ENCODE measurements at regions of chr22 and their contacts with region 1.

Region 1: DNA sequence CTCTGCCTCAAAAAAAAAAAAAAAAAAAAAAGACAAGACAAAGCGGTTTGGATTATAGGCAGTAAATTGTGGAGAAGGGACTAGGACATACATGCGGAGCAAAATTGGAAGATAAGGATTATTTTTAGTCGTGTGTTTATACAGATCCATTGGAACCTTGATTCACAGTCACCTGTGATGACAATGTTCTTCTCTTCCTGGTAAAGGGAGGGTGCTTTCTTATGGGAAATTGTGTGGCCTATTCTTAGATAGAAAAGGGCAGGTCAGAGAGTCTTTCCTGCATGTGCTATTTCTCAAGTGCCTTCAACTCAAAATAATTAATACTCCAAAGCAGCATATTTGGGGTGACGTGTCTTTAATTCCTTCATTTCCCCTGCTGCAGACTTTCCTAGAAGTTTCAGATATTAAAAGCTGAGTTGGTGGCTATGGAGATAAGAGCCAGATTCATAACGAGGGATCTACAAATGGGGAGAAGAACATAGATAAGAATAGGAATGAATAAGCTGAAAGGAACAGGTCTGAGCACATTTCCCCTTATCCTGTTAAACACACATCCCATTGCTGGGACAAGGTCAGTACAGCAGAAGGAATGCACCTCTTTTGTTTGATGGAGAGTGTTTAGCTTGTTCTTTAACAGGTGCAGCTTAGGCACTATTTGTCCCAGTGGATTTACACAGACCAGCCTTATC is 22.5 kb downstream of the GSTT2B start:
- DNase-seq: no peak
- H3K4me3 ChIP-seq: no peak overlapping the region
- H3K27ac ChIP-seq: peak overlapping the region in 3 of 4 donors; percentile 19 to 58 (median 51)
- H3K4me1 ChIP-seq: peaks cover 0 to 14% (median 0%) of the 10 kb centered on the region in 3 donors
- H3K27me3 ChIP-seq: no peaks in the 10 kb centered on the region
- CTCF ChIP-seq: no peak
- POLR2A ChIP-seq: no peak

Region 2: GRCh38 chr22:23878219-23878618 is 60.3 kb before region 1 on chr22:
- intact Hi-C with region 1: no loop called
- DNase-seq: no peak
- H3K4me3 ChIP-seq: no peak overlapping the region
- H3K27ac ChIP-seq: no peak overlapping the region
- H3K4me1 ChIP-seq: no peaks in the 10 kb centered on the region
- H3K27me3 ChIP-seq: no peaks in the 10 kb centered on the region
- CTCF ChIP-seq: no peak
- POLR2A ChIP-seq: no peak

Region 3: DNA sequence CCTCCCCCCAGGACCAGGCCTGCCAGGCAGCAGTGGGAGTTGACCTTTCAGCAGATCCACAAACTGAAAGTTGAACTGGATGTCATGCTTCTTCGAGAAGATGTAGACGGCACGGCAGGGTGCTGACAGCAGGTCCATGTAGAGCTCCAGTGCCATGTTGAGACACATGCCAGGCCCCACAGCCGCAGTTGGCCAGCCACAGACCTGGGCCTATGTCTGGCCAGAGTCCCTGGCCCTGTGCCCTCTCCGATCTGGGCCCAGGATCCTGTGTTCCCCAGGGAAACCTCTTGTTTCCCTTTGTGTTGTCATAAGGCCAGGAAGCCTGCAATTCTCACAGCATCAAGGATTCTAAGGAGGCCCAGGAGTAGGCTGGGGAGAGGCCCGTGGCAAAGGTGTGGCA is 66.7 kb after region 1 on chr22 and contains the start of gene GSTT4:
- intact Hi-C with region 1: loop called (anchors 5 kb)
- DNase-seq: no peak
- H3K4me3 ChIP-seq: no peak within 1 kb of the TSS
- H3K27ac ChIP-seq: no peak within 1 kb of the TSS
- H3K4me1 ChIP-seq: peaks cover 0 to 11% (median 0%) of the 10 kb centered on the region in 3 donors
- H3K27me3 ChIP-seq: no peaks in the 10 kb centered on the region
- CTCF ChIP-seq: no peak
- POLR2A ChIP-seq: no peak
- total RNA-seq, gene GSTT4: not detected

Region 4: DNA sequence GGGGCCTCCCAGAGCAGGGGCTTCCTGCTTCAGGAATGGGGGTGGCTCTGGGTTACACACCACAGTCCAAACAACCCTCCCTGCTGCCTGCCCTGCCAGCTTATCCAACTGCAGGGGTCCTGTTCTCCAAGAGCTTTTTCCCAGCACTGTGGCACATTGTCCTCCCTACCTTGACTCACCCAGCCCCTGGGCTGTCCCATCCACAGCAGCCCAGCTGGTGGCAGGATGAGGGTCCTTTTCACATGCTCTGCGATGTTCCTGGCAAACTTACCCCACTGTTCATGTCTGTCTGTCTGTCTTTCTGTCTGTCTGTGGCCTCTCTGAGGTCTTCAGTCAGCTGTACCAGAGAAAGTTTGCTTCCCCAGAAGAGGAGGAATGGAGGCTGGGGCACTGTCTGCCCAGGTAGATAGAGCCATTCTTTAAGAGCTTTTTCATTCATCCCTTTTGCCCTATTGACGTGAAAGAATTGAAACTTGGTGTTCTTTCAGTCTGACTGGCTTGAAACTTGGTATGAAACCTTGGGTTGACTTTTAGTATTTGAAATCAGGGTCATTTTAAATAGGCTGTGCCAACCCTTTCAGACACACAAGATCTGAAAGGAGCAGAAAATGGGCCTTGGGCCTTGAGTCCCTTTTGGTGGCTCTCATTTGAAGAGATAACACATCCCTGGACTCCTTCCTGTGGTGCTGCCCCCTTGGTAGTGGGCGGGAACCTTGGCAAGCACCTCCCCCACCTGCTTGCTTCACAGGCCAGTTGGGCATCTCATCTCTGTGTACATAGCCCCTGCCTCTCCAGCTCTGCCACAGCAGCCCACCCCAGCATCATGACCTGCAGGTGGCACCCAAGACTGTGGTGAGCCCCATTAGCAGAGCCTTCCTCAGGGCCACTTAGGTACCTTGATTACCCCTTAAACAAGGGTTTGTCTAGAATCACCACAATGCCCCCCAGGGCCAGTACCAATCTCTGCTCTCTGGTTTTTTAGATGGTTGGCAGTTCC is 168.2 kb after region 1 on chr22:
- intact Hi-C with region 1: no loop called
- DNase-seq: no peak
- H3K4me3 ChIP-seq: no peak overlapping the region
- H3K27ac ChIP-seq: peak overlapping the region; percentile 30 to 85 (median 69)
- H3K4me1 ChIP-seq: peaks cover 7 to 40% (median 25%) of the 10 kb centered on the region in 3 donors
- H3K27me3 ChIP-seq: no peaks in the 10 kb centered on the region
- CTCF ChIP-seq: peak in 2 of 6 experiments; percentile 5 to 20
- POLR2A ChIP-seq: no peak

Measured in esophagus squamous epithelium (tissue), 5 donors.